Ascending aorta (tissue), 2 donors: ENCODE measurements at regions of chr10 and their contacts with region 1.

Region 1: DNA sequence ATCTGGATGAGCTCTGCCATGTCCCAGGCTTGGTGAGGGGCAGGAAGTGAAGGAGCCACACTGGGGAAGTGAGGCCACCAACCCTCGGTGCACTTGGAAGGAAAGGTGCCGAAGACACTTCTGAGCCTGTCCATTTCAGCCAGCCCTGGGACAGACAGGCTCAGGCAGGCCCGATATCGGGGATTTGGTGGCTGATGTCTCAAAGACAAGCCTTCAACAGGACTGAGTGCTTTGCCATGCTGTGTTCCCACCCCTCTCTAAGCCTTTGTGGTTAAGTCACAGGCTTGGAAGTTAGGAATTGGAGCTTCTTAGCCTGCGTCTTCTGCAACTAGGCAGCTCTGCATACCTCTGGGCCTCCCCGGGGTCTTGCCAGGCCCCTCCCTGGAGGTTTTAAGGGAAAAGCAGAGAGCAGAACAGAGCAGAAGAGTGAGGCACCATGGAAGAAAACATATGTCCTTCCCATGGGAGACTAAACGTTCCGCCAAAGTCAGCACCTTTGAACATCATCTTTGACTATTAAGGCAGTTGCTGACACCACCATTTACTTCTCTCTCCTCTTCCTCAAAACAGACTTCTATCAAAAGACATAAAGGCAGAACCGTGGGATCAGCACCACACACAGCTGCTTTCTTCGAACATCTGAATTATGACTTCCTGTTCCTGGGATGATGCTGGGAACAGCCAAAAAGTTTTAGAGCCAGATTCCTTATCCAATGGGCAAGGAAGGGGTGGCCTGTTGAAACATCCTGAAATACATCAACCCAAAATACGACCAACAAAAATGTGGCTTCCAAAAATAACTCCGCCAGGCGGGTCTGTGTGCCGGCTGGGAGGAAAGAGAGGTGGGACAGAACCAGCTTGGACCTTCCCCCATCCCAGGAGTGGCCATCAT is 71.8 kb downstream of the AFAP1L2 start:
- DNase-seq: peak in 1 of 2 donors; percentile 78
- H3K4me3 ChIP-seq: peak overlapping the region in 1 of 2 donors; percentile 4
- H3K27ac ChIP-seq: peak overlapping the region; percentile 73 to 86
- H3K4me1 ChIP-seq: peaks cover 8 to 33% of the 10 kb centered on the region in 2 donors
- H3K27me3 ChIP-seq: no peaks in the 10 kb centered on the region
- CTCF ChIP-seq: no peak

Region 2: DNA sequence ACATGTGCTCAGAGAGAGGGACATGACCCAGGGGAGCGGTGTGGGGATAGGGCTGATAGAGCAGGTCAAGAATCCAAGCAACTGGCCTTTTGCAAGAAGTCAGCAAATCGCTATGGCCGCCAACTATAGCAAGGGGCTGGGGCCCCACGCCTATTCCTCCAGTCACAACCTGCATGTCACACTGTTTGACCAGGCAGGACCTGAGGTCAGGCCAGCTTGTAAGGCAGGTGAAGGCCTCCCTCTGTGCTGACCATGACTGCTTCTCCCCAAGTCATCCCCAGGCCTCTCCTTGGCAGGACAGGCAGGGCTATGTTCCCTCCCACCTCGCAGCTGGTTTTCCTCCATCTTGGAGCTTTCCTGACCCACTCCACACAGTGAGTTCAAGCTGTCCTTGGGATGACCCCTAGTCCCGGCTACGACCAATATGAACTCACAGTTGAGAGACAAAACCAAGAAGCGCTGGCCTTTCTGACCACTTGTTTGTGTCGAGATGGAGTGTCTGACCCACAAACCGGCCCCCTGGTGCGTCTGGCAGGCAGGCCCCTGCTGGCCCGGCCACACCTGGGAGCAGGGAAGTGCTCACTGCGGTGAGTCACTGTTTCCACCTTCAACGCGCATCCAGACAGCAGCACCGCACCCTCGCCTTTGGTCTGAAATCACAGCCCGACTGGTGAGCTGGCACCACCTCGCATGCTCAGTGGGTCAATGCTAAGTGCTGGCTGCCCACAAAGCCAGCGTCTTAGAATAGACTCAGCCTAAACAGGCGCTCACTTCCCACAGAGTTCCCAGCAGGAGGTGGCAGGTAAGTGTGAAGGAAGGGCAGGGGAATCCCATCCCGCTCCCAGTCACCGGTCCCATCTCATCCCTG is 12.1 kb before region 1 on chr10:
- intact Hi-C with region 1: no loop called
- DNase-seq: no peak
- H3K4me3 ChIP-seq: no peak overlapping the region
- H3K27ac ChIP-seq: no peak overlapping the region
- H3K4me1 ChIP-seq: no peaks in the 10 kb centered on the region
- H3K27me3 ChIP-seq: no peaks in the 10 kb centered on the region
- CTCF ChIP-seq: no peak

Region 3: DNA sequence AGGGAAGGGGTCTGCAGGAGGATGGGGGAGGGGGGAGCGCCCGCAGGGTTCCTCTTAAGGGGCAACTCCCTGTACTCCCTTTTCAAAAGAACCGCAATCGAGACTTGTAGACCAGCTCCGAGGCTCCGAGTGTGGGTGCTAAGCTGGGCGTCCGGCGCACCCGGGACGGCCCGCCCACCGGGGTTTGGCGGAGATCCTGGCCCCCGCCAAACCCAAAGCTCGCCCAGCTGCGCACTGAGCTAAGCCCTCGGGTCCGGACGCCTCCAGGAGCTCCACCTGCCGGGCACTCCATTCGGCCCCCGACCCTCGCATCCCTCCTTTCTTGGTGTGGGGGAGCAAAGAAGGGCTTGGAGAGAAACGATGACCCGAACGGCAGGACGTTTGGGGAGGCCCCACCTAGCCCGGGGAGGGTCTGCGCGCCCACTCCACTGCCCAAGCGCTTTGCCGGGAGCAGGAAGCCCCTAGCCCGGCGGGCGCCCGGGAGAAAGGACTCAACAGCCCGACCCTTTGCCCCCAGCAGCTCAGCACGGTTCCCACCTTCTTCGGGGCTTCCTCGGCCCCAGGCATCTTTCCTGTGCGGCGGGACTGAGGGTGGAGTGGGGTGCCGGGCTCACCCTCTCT is 71.1 kb after region 1 on chr10:
- intact Hi-C with region 1: loop called (anchors 2 kb)
- DNase-seq: peak in 1 of 2 donors; percentile 66
- H3K4me3 ChIP-seq: peak overlapping the region; percentile 66 to 72
- H3K27ac ChIP-seq: peak overlapping the region; percentile 24 to 55
- H3K4me1 ChIP-seq: peaks cover 0 to 10% of the 10 kb centered on the region in 2 donors
- H3K27me3 ChIP-seq: no peaks in the 10 kb centered on the region
- CTCF ChIP-seq: peak in 2 of 3 experiments; percentile 12 to 47